Lower leg skin (tissue), 4 donors: ENCODE measurements at regions of chr11 and their contacts with region 1.

Region 1: GRCh38 chr11:35617687-35618496 is at the start of gene FJX1:
- DNase-seq: peak; percentile 50 to 86
- H3K4me3 ChIP-seq: peak within 1 kb of the TSS; percentile 37
- CTCF ChIP-seq: no peak
- POLR2A ChIP-seq: no peak
- total RNA-seq, gene FJX1: 21.2 to 24.1 (median 22.5) TPM

Region 2: GRCh38 chr11:35507688-35508087 is 110.2 kb before region 1 on chr11:
- intact Hi-C with region 1: no loop called
- DNase-seq: no peak
- H3K4me3 ChIP-seq: no peak overlapping the region
- CTCF ChIP-seq: no peak
- POLR2A ChIP-seq: no peak

Region 3: DNA sequence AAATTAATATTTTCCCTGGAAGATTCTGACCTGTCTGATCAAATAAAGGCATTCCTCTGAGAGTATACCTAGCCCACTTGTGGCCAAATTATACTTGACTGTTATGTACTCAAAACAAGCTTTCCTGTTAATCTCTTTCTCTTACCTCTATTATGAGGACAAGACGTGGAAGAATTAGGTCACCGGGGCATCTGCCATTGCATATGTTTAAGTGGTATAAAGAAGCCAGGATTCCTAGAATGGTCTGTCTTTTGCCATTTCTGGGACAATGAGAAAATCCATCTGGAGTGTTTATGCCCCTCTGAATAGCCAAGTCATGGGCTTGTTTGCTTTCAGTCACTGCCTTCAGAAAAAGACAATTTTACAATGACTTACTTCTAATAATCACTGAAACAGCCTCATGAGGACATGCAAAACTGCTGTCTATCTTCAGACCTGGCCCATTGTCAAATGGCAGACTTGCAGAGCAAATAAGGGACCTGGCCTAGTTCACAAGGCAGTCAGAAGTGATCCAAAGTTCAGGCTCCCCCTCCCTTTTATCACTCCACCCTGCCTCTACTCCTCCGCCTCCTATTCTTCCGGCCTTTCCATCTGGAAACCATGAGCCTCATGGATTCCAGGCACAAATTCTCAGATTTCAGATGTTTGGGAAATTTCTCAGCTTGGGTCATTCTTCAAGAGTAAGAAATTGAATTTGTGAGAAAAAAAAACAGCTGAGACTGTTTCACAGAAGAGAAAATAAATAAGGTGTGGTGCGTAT is 197.8 kb after region 1 on chr11:
- intact Hi-C with region 1: loop called (anchors 10 kb)
- DNase-seq: peak in 1 of 2 donors; percentile 63
- H3K4me3 ChIP-seq: no peak overlapping the region
- CTCF ChIP-seq: no peak
- POLR2A ChIP-seq: no peak

Region 4: DNA sequence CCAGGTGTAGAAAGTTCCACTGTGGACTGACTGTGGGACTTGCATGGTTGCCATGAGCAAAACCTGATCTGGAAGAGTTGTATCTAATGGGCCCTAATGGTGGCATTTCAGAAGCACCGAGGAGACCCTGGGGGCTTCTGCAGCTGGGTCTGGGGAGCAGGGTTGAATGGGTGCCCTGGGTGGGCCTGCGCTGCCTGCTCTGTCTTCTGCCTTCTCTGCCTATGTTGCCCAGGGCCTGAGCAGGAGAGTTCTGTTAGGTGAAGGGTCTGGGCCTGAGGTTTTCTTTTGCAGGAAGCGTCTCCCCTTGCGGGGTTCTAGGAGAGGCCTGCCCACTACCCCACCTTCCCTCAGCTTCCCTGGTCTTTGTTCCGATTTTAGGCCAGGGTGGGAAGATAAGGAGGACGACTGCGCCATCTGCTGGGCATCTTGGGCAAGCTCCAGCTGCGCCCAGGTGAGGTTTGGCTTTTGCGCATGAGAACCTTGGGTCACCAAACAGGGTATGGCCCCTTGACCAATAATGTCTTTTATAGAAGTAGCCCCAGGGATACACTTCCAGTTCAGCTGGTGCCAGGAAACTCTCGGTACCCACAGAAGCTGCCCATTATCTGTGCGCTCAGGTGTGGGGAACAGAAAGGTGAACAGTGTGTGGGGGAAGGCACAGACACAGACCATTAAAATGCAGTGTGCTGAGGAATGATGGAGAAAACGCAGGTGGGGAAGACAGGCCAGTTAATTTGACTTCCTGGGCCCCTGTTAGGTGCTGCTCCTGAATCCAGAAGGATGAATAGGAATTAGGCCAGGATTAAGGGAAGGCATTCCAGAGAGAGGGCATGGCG is 648.1 kb after region 1 on chr11:
- intact Hi-C with region 1: loop called (anchors 5 kb)
- DNase-seq: peak in 1 of 2 donors; percentile 31
- H3K4me3 ChIP-seq: no peak overlapping the region
- CTCF ChIP-seq: peak in 1 of 3 donors; percentile 14
- POLR2A ChIP-seq: no peak